Right ventricle myocardium inferior (tissue), 1 donor: ENCODE measurements at regions of chr11 and their contacts with region 1.

Region 1: DNA sequence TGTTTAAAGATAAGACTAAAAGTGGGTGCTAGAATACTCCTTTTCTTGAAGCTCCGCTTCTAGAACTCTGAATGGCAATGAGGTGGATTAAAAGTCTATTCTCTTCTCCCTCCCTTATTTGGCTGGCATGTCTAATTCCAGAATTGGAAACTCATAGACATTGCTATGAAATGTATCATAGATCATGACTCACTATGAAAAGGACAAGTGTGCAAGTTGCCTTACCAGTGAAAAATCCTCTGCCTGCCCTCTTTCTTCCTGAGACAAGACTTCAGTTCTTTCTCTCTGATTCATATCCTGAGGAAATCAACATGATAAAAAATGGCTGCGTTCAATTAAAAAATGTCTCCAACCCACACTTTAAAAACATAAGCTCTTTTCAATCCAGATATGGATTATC is 73.2 kb upstream of the BLID start:
- DNase-seq: no peak
- ATAC-seq: peak; percentile 68

Region 2: GRCh38 chr11:122137081-122137793 is 52.0 kb before region 1 on chr11:
- intact Hi-C with region 1: loop called (anchors 10 kb)
- DNase-seq: no peak
- ATAC-seq: peak; percentile 81